Activated T-helper 1 cell treated with anti-CD3 and anti-CD28 coated beads, Interleukin-12 subunit alpha, Interleukin-12 subunit beta, Interleukin-2, Interleukin-4 antibody, amounts not matched to agents 30 ng/mL and 10 ng/mL and 1 ng/mL, durations not matched to agents 14 hours and 24 hours and 36 hours (primary cell): ENCODE measurements at regions of chr19 and their contacts with region 1.

Region 1: DNA sequence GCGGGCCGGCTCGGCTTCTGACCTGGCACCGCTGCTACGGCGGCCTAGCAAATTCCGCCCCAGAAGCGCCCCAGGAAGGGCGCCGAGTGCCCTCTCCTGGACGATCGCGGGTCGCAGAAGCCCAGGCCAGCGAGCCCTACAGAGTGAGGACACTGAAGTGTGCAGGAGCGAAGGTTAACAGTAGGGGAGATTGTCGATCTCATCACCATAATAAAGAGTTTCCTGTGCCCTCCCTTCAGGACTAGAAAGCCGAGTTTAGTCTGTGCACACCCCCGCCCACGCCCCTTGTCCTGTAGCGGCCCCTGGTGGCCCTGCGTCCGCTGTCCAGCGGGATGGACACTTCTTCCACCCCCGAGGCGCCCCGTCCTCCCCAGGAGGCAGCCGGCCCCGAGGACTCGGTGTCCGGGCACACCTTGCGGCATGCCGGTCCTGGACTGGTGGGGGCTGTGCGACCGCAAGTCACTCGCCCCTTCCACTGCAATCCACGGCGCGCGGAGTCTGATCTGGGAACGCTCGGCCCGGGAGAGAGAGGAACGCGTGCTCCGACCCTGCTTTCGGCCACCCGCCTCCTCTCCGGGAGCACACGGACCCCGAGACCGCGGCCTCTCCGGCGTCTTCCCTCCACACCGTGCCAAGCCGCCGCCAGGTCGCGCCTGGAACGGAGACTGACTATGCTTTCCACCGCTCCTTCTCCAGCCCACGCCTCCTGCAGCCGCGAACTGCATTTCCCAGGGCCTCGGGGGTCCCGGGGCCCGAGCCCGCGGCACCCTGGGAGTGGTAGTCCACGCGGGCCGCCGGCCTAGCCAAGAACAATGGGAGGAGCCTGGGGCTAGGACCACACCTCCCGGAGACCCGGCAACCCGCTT is 769 bp upstream of the KMT2B start:
- DNase-seq: peak; percentile 97
- H3K4me3 Mint-ChIP-seq: peak overlapping the region; percentile 99
- H3K27ac Mint-ChIP-seq: peak overlapping the region; percentile 98
- H3K4me1 Mint-ChIP-seq: peaks cover 50% of the 10 kb centered on the region
- H3K27me3 Mint-ChIP-seq: no peaks in the 10 kb centered on the region

Region 2: DNA sequence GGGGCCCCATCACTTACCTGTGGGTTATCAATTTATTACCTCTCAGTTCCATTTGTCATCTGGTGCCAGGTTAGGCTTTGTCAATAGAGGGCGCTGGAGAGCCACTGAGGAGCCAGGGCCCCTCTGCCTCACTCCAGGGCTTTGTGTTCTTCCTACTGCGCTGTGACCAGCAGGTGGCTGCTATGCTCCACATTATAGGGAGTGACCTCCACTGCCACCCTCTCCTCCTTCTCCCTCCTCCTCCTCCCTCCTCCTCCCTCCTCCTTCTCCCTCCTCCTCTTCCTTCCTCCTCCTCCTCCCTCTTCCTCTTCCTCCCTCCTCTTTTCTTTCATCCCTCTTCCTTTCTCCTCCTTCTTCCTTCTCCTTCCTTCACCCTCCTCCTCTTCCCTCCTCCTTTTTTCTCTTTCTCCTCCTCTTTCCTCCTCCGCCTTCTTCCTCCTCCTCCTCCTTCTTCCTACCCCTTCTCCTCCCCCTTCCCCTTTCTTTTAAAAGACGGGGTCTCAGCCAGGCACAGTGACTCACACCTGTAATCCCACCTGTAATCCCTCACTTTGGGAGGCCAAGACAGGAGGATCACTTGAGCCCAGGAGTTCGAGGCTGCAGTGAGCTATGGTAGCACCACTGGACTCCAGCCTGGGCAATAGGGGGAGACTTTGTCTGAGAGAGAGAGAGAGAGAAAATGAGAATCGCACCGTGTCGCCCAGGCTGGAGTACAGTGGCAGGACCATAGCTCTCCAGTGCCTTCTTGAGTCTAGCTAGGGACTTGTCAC is 23.0 kb before region 1 on chr19:
- intact Hi-C with region 1: loop called (anchors 1 kb)
- DNase-seq: peak; percentile 86
- H3K4me3 Mint-ChIP-seq: no peak overlapping the region
- H3K27ac Mint-ChIP-seq: peak overlapping the region; percentile 38
- H3K4me1 Mint-ChIP-seq: peaks cover 27% of the 10 kb centered on the region
- H3K27me3 Mint-ChIP-seq: no peaks in the 10 kb centered on the region

Region 3: GRCh38 chr19:35748106-35749020 is 31.3 kb after region 1 on chr19 and contains the start of gene LIN37:
- intact Hi-C with region 1: loop called (anchors 1 kb)
- DNase-seq: peak; percentile 99
- H3K4me3 Mint-ChIP-seq: peak within 1 kb of the TSS; percentile 97
- H3K27ac Mint-ChIP-seq: peak within 1 kb of the TSS; percentile 89
- H3K4me1 Mint-ChIP-seq: peaks cover 43% of the 10 kb centered on the region
- H3K27me3 Mint-ChIP-seq: peaks cover 2% of the 10 kb centered on the region
- total RNA-seq, gene LIN37: 9.3 and 9.8 TPM in 2 replicates

Region 4: DNA sequence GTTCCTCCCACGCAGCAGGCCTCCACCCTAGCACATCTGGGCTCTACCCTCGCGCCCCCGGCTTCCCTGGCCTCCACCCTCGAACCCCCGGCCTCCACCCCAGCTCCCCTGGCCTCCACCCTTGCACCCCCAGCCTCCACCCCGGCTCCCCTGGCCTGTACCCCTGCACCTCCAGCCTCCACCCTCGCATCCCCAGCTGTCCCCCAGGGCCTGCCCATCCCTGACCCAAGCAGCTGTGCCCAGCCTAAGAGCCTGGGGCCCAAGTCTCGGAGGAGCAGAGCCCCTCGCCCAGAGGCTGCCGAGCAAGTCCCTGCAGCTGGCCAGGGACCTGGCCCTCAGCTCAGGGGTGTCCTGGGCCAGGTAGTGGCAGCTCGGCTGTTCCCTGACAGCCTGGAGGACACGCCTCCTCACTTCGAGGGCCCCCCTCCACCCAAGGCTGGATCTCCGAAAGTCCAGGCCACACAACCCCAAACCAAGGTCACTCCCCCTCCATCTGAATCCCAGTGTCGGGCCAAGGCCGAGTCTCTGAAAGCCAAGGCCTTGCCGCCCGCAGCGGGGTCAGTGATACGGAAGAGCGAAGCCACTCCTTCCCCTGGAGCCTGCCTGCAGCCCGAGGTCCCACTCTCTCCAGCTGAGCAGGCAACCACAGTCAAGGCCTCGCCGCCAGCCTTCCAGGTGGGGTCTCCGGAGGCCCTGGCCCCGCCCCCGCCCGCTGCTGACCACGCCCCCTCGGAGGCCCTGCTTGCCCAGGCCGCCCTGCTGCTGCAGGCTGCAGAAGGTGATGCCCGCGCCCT is 50.5 kb after region 1 on chr19:
- intact Hi-C with region 1: no loop called
- DNase-seq: no peak
- H3K4me3 Mint-ChIP-seq: no peak overlapping the region
- H3K27ac Mint-ChIP-seq: no peak overlapping the region
- H3K4me1 Mint-ChIP-seq: no peaks in the 10 kb centered on the region
- H3K27me3 Mint-ChIP-seq: no peaks in the 10 kb centered on the region

Region 5: DNA sequence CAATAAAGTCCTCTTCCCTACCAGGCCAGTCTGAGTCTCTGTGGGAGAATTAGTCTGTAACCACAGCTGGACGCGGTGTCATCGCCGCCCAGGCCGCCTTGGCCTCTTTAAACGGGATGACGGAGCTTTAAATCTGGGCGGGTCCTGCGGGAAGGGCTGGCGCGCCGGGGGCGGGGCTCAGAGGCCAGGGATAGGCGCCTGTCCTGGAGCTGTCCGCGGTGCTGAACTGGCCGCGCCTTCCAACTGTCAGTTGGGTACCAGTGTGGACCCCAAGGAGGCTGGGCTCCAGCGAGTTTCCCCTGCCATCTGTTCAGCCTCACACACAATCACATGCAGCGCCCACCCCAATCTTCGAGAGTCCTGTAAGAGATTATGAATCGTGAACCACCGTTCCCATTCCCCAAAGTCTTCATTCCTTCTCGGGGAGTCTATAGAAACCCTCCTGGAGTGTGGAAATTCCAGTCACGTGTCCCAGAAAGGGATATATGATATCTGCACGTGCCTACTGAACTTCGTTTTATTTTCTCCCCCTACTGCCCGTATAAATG is 162.8 kb after region 1 on chr19:
- intact Hi-C with region 1: loop called (anchors 1 kb)
- DNase-seq: peak; percentile 80
- H3K4me3 Mint-ChIP-seq: no peak overlapping the region
- H3K27ac Mint-ChIP-seq: peak overlapping the region; percentile 23
- H3K4me1 Mint-ChIP-seq: peaks cover 15% of the 10 kb centered on the region
- H3K27me3 Mint-ChIP-seq: peaks cover 12% of the 10 kb centered on the region

Region 6: GRCh38 chr19:36014029-36014924 is 297.2 kb after region 1 on chr19 and contains the start of gene ALKBH6:
- intact Hi-C with region 1: loop called (anchors 5 kb)
- DNase-seq: peak; percentile 100
- H3K4me3 Mint-ChIP-seq: peak within 1 kb of the TSS; percentile 98
- H3K27ac Mint-ChIP-seq: peak within 1 kb of the TSS; percentile 96
- H3K4me1 Mint-ChIP-seq: peaks cover 46% of the 10 kb centered on the region
- H3K27me3 Mint-ChIP-seq: no peaks in the 10 kb centered on the region
- total RNA-seq, gene ALKBH6: 48.3 and 60.6 TPM in 2 replicates